ENCODE measurements at regions of chr1 and their contacts with region 1.

Region 1: GRCh38 chr1:116737020-116737854 is 17.0 kb upstream of the CD2 start:
- DNase-seq: peak; percentile 47 to 57 (median 53)
- H3K4me3 ChIP-seq: no peak overlapping the region
- H3K4me3 Mint-ChIP-seq: no peak overlapping the region
- H3K27ac ChIP-seq: no peak overlapping the region
- H3K27ac Mint-ChIP-seq: peak overlapping the region in 1 of 7 donors; percentile 50
- H3K4me1 ChIP-seq: peaks cover 34 to 39% of the 10 kb centered on the region in 2 donors
- H3K4me1 Mint-ChIP-seq: peaks cover 42% of the 10 kb centered on the region
- H3K27me3 ChIP-seq: no peaks in the 10 kb centered on the region
- H3K27me3 Mint-ChIP-seq: peaks cover 0 to 4% (median 1%) of the 10 kb centered on the region in 3 donors
- CTCF ChIP-seq: peak; percentile 83

Region 2: GRCh38 chr1:116817582-116818064 is 80.4 kb after region 1 on chr1:
- intact Hi-C with region 1: loop called (anchors 2 to 5 kb)
- DNase-seq: peak; percentile 30 to 61 (median 46)
- H3K4me3 ChIP-seq: no peak overlapping the region
- H3K4me3 Mint-ChIP-seq: no peak overlapping the region
- H3K27ac ChIP-seq: no peak overlapping the region
- H3K27ac Mint-ChIP-seq: no peak overlapping the region
- H3K4me1 ChIP-seq: no peaks in the 10 kb centered on the region
- H3K4me1 Mint-ChIP-seq: peaks cover 9% of the 10 kb centered on the region
- H3K27me3 ChIP-seq: no peaks in the 10 kb centered on the region
- H3K27me3 Mint-ChIP-seq: no peaks in the 10 kb centered on the region
- CTCF ChIP-seq: peak; percentile 90

Region 3: GRCh38 chr1:116934586-116935207 is 197.5 kb after region 1 on chr1:
- intact Hi-C with region 1: loop called in 1 of 2 experiments (anchors 10 kb)
- DNase-seq: peak; percentile 19 to 36 (median 25)
- H3K4me3 ChIP-seq: no peak overlapping the region
- H3K4me3 Mint-ChIP-seq: no peak overlapping the region
- H3K27ac ChIP-seq: no peak overlapping the region
- H3K27ac Mint-ChIP-seq: no peak overlapping the region
- H3K4me1 ChIP-seq: no peaks in the 10 kb centered on the region
- H3K4me1 Mint-ChIP-seq: peaks cover 12% of the 10 kb centered on the region
- H3K27me3 ChIP-seq: no peaks in the 10 kb centered on the region
- H3K27me3 Mint-ChIP-seq: peaks cover 0 to 2% (median 1%) of the 10 kb centered on the region in 3 donors
- CTCF ChIP-seq: peak; percentile 69

Region 4: DNA sequence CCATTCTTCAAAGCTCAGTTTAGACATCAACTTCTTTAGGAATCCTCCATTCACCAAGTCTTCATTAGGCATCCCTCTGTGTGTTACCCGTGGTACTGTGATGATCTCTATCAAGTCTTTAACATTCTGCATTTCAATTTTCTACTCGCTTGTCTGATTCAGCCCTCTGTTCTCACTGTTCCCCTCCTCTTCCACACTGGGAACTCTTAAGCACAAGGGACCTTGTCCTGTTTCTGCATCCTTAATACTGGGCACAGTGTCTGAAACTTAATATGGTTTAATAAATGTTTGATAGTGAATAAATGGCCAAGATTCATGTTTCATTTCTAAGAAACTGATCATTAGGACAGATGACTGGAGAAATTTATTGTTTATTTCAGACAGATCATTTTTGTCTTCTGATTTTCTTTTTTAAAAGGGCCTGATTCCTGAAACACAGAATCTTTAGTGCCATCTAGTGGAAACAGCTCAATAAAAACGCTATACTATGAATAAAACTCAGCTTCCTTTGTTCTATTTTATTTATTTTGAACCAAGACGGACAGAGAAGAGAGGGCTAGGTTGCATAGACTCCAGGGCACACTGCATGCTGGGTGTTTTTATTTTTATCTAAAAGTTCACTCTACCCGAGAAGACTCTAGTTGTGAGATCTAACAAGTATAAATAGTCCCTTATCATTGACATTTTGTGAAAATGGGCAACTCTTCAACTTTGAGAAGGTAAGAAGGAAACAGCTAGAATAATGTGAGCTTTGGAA is 391.3 kb after region 1 on chr1:
- intact Hi-C with region 1: loop called in 1 of 2 experiments (anchors 5 kb)
- DNase-seq: peak in 1 of 3 donors; percentile 25
- H3K4me3 ChIP-seq: no peak overlapping the region
- H3K4me3 Mint-ChIP-seq: no peak overlapping the region
- H3K27ac ChIP-seq: no peak overlapping the region
- H3K27ac Mint-ChIP-seq: peak overlapping the region in 1 of 7 donors; percentile 23
- H3K4me1 ChIP-seq: no peaks in the 10 kb centered on the region
- H3K4me1 Mint-ChIP-seq: peaks cover 4% of the 10 kb centered on the region
- H3K27me3 ChIP-seq: no peaks in the 10 kb centered on the region
- H3K27me3 Mint-ChIP-seq: peaks cover 0 to 7% (median 0%) of the 10 kb centered on the region in 3 donors
- CTCF ChIP-seq: peak; percentile 49